ENCODE measurements at regions of chr17 and their contacts with region 1.

Region 1: DNA sequence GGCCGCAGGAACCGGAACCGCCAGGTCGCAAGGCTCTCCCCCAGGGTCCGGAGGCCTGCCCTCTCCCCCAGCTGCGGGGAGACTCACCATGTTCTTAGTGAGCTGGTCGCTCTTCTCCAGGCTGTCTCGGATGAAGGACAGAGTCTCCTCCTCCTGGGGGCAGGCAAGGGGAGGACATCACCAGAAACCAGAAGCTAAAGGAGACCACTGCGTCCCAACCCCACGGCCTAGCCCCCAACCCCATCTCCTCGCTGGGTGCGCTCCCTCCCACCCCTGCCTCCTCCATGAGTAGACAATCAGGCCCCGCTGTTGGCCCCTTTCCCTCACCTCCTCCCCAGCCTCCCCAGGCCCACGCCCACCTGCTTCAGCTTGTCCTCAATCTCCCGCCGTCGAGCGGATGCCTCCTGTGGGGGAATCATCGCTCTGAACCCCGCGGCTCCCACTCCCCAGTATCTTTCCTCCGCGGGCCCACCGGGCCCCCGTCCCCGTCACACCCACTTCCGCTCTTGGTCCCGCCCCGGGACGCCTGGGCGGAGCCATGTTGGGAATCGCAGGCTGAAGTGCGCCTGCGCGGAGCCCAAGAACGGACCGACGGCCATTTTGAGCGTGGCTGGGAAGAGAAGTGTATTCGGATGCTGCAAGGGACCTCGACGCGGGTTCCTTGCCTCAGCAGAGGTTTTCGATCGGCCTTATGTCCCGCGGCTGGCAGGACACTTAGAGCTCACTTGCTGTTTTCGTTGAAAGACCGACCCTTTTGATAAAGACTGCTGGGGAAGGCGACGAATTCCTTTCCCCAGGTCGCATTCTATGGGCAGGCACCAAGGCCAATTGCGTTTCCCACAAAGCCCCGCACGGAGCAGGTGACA is at the start of gene EXOC7:
- DNase-seq: peak; percentile 91
- H3K4me3 ChIP-seq: peak within 1 kb of the TSS; percentile 73 to 87 (median 78)
- H3K27ac ChIP-seq: peak within 1 kb of the TSS; percentile 52
- H3K4me1 ChIP-seq: peaks cover 8% of the 10 kb centered on the region
- H3K27me3 ChIP-seq: no peaks in the 10 kb centered on the region
- CTCF ChIP-seq: peak in 1 of 2 donors; percentile 17
- POLR2A ChIP-seq: peak; percentile 88
- total RNA-seq, gene EXOC7: 122 and 137 TPM in 2 replicates

Region 2: DNA sequence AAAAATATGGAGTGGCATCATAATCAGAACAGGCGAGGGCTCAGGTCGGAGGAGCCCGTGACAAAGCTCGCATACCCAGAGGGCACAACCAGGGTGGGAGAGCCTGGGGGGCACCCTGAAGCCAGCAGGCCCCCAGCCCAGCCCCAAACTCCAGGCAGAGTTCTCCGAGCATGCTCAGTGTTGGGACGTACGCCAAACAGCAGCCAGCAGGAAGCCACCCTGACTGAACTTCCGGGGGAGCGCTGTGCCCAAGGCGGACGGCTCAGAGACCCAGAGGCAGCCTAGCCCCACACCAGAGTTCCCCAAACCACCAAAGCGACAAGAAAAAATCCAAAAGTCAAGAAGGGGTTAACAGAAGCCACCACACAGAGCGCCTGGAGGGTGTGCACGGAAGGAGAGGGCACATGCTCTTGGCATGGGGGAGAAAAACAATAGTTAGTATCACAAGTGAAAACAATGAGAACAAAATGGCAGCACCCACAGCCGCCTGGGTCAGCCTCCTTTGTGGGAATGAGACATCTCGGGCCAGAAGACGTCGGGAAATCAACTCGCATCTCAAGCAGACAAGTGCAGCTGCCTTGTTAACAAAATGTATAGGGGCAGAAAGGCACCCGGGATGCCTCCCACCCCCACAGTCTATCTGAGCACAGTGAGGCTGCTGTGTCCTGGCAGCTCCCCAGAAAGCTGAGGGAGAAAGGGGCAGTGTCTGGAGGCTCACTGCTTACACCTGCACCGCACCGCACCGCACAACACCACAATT is 11.8 kb before region 1 on chr17:
- CTCF ChIA-PET with region 1: interaction called, 4 read pairs
- POLR2A ChIA-PET with region 1: no interaction called
- dilution Hi-C with region 1: no loop called
- intact Hi-C with region 1: loop called (anchors 1 kb)
- DNase-seq: peak; percentile 50
- H3K4me3 ChIP-seq: no peak overlapping the region
- H3K27ac ChIP-seq: peak overlapping the region; percentile 72
- H3K4me1 ChIP-seq: peaks cover 10% of the 10 kb centered on the region
- H3K27me3 ChIP-seq: no peaks in the 10 kb centered on the region
- CTCF ChIP-seq: no peak
- POLR2A ChIP-seq: peak; percentile 53